ENCODE measurements at regions of chr10 and their contacts with region 1.

Region 1: DNA sequence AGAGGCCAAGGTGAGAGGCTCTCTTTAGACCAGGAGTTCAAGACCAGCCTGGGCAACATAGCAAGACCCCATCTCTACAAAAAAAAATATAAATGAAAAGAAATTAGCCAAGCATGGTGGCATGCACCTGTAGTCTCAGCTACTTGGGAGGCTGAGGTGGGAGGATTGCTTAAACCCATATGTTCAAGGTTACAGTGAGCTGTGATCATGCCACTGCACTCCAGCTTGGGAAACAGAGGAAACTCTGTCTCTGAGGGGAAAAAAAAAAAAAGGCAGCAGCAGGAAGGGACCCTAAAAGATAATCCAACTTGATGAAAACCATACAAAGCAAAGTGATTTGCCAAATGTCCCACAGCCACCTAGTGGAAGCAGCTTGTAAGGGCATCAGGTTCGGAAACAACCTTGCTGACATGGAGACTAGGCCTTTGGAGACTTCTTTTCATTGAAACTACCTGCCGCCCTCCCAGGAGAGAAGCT is 15.6 kb upstream of the PBLD start:
- DNase-seq: peak; percentile 56
- H3K4me3 Mint-ChIP-seq: no peak overlapping the region
- H3K27ac Mint-ChIP-seq: no peak overlapping the region
- H3K4me1 Mint-ChIP-seq: no peaks in the 10 kb centered on the region
- H3K27me3 Mint-ChIP-seq: no peaks in the 10 kb centered on the region
- CTCF ChIP-seq: peak; percentile 89

Region 2: DNA sequence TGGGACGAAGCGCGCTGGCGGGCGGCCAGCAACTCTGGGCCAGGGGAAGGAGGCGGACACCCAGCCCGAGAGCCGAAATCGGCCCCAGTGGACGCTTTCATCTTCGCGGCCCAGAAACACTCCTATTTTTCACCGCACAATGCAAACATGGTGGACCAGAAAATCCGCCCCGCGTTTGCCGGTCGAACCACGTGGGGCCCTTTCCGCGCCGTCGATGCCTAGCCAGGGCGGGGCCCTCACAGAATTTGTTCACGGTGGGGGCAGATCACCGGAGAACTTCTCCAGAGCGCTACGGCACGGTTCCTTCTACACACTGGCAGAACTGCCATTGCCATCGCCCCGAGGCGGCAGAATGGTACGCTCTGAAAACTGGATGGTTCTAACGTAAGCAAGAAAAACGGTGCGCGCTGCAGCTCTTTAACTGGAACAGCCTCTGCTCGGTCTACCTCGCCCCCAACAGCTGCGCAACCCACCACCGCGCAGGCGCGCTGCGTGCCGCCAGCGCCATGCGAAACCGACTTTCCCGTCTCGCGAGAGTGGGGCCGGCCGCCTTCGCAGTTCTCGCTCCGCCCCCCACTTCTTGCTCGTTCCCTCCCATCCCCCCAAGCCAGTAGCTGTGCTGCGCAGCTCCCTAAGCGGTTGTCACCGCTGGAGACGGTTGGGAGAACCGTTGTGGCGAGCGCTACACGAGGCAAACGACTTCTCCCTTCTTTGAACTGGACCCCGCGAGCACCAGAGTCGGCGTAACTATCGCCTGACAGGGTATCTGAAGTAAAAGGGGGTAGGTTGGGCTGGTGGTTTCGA is 16.6 kb before region 1 on chr10 and contains the start of gene HNRNPH3:
- CTCF ChIA-PET with region 1: interaction called, 4 read pairs
- intact Hi-C with region 1: loop called (anchors 2 kb)
- DNase-seq: peak; percentile 99
- H3K4me3 Mint-ChIP-seq: peak within 1 kb of the TSS; percentile 98
- H3K27ac Mint-ChIP-seq: peak within 1 kb of the TSS; percentile 88
- H3K4me1 Mint-ChIP-seq: peaks cover 56% of the 10 kb centered on the region
- H3K27me3 Mint-ChIP-seq: no peaks in the 10 kb centered on the region
- CTCF ChIP-seq: no peak
- total RNA-seq, gene HNRNPH3: 170 and 184 TPM in 2 replicates

Region 3: GRCh38 chr10:68446179-68446578 is 97.9 kb after region 1 on chr10:
- CTCF ChIA-PET with region 1: no interaction called
- intact Hi-C with region 1: no loop called
- DNase-seq: no peak
- H3K4me3 Mint-ChIP-seq: no peak overlapping the region
- H3K27ac Mint-ChIP-seq: no peak overlapping the region
- H3K4me1 Mint-ChIP-seq: peaks cover 8% of the 10 kb centered on the region
- H3K27me3 Mint-ChIP-seq: no peaks in the 10 kb centered on the region
- CTCF ChIP-seq: no peak

Region 4: GRCh38 chr10:68901104-68901927 is 553.0 kb after region 1 on chr10 and contains the start of gene DDX50:
- CTCF ChIA-PET with region 1: no interaction called
- intact Hi-C with region 1: loop called (anchors 10 kb)
- DNase-seq: peak; percentile 98
- H3K4me3 Mint-ChIP-seq: peak within 1 kb of the TSS; percentile 94
- H3K27ac Mint-ChIP-seq: peak within 1 kb of the TSS; percentile 90
- H3K4me1 Mint-ChIP-seq: peaks cover 28% of the 10 kb centered on the region
- H3K27me3 Mint-ChIP-seq: no peaks in the 10 kb centered on the region
- CTCF ChIP-seq: no peak
- total RNA-seq, gene DDX50: 39.1 and 44.4 TPM in 2 replicates